Activated CD4-positive, alpha-beta T cell treated with anti-CD3 and anti-CD28 coated beads for 36 hours (primary cell): ENCODE measurements at regions of chrX and their contacts with region 1.

Region 1: DNA sequence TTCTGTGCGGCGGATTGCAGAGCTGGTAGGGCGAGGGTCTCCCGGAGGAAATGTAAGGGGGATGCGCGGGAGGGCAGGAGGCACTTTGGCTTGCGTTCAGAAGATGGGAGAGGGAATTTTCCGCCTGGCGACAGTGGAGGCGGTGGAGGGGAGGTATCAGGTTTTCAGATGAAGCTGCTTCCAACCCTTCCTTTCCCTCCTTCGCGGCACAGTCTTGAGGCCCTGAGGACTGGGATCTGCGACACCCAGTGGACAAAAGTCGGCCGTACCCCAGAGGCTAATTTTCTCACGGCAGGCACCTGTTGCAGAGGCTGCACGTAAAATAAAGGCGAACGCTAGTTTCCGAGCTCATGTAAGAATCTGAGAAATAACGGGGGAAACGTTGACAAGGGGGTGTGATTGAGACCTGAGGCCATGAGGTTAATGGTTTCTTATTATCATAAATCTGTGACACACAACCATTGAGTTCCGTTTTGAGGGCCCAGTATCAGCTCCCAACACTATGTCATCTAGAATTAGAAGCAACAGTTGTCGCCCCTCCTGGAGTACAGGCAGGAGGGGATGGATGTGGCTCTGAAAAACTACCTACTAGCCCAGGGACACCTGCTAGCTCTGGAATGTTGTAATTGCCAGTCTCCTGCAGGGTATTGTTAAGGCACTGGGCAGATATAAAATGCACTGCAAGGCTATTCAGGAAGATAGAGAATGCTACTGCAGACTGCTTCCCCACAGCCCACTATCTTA is 1.1 kb downstream of the ZCCHC18 start:
- DNase-seq: peak; percentile 70
- ATAC-seq: peak; percentile 73
- H3K4me3 Mint-ChIP-seq: peak overlapping the region; percentile 74
- H3K27ac Mint-ChIP-seq: peak overlapping the region; percentile 65
- H3K4me1 Mint-ChIP-seq: peaks cover 36% of the 10 kb centered on the region
- H3K27me3 Mint-ChIP-seq: no peaks in the 10 kb centered on the region

Region 2: DNA sequence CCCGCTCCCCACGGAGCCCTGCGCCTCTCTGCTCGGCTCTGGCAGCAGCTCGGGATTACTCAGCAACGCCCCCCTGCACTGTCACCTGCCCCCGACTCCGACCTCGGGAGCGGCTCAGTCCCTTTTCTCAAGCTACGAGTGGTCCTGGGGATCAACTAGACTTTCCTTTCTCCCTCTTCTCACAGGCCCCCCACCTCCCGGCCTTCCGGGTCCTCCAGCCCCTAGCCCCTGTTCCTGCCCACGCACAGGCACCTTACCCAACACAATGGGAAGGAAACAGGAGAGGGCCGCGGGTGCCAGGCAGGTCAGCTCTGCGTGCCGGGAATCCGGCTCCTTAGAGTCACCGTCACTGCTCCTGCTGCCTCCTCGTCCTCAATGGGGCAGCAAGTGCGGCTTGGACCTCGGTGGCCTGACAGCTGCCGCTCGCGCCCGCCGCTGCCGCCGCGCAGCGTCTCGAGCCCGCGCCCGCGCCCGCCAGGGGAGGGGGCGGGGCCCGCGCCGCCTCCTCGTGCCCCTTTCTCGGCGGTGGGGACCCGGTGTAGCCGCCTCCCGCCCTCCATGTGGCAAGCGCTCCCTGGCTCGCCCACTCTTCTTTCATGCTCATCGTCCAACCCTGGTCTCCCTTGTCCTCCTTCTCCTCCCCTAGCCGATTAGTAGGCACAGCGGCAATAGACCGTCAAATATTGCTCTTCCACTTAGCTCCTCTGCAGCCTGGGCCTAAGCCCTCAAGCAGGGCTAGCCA is 281.4 kb before region 1 on chrX and contains the start of gene RAB9B:
- CTCF ChIA-PET with region 1: no interaction called
- POLR2A ChIA-PET with region 1: no interaction called
- intact Hi-C with region 1: loop called in 1 of 2 experiments (anchors 5 kb)
- DNase-seq: peak; percentile 31
- ATAC-seq: peak; percentile 98
- H3K4me3 Mint-ChIP-seq: peak within 1 kb of the TSS; percentile 71
- H3K27ac Mint-ChIP-seq: peak within 1 kb of the TSS; percentile 72
- H3K4me1 Mint-ChIP-seq: peaks cover 6% of the 10 kb centered on the region
- H3K27me3 Mint-ChIP-seq: no peaks in the 10 kb centered on the region
- total RNA-seq, gene RAB9B: 0.37 to 0.48 TPM

Region 3: GRCh38 chrX:104411800-104412199 is 298.4 kb after region 1 on chrX:
- CTCF ChIA-PET with region 1: no interaction called
- POLR2A ChIA-PET with region 1: no interaction called
- intact Hi-C with region 1: no loop called
- DNase-seq: no peak
- ATAC-seq: no peak
- H3K4me3 Mint-ChIP-seq: no peak overlapping the region
- H3K27ac Mint-ChIP-seq: no peak overlapping the region
- H3K4me1 Mint-ChIP-seq: no peaks in the 10 kb centered on the region
- H3K27me3 Mint-ChIP-seq: no peaks in the 10 kb centered on the region

Region 4: DNA sequence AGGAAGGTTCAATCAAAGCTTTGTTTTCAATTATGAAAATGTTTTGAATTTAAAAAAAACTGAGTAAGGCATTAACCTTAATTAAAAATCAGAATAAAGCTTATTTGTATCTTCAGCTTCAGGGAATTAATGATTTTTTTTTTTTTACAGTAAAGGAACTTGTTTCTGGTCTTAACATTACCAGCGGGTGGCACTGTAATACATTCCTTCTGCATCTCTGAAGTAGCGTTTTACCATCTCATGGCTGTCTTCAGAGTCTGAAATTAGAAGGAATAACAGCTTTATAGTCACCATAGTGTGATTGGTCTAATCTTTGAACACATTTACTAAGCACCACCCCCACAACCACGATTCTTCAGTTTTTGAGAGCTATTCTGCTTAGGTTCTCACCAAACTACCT is 555.2 kb after region 1 on chrX:
- CTCF ChIA-PET with region 1: no interaction called
- POLR2A ChIA-PET with region 1: no interaction called
- intact Hi-C with region 1: no loop called
- DNase-seq: no peak
- ATAC-seq: no peak
- H3K4me3 Mint-ChIP-seq: no peak overlapping the region
- H3K27ac Mint-ChIP-seq: no peak overlapping the region
- H3K4me1 Mint-ChIP-seq: no peaks in the 10 kb centered on the region
- H3K27me3 Mint-ChIP-seq: no peaks in the 10 kb centered on the region

Region 5: DNA sequence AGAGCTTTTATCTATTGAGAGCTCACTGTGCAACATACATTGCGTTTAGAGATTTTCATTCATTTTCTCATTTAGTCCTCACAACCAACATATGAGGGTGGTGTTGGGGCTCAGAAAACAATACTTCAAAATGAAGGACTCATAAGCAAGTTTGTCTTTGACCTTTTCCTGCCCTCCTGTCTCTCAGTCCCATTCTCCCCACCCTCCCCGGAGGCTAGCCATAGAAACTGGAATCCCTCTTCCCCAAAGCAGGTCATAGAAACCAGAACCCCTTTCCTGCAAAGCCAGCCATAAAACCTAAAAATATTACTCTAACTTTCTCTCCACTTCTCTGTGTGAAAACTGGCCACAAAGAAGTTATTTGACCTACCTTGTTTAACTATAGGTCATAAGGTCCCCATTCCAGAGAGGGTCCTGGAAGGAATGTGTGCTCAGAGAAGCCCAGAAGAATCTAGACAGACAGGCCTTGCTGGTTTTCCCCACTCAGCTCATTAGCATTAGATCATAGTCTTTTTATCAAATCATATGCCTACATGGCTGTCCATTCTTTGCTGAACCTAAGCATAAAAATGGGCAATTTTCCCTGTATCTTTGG is 1159.8 kb after region 1 on chrX:
- CTCF ChIA-PET with region 1: no interaction called
- POLR2A ChIA-PET with region 1: no interaction called
- intact Hi-C with region 1: no loop called
- DNase-seq: no peak
- ATAC-seq: no peak
- H3K4me3 Mint-ChIP-seq: no peak overlapping the region
- H3K27ac Mint-ChIP-seq: no peak overlapping the region
- H3K4me1 Mint-ChIP-seq: no peaks in the 10 kb centered on the region
- H3K27me3 Mint-ChIP-seq: no peaks in the 10 kb centered on the region